ENCODE measurements at regions of chr22 and their contacts with region 1.

Region 1: DNA sequence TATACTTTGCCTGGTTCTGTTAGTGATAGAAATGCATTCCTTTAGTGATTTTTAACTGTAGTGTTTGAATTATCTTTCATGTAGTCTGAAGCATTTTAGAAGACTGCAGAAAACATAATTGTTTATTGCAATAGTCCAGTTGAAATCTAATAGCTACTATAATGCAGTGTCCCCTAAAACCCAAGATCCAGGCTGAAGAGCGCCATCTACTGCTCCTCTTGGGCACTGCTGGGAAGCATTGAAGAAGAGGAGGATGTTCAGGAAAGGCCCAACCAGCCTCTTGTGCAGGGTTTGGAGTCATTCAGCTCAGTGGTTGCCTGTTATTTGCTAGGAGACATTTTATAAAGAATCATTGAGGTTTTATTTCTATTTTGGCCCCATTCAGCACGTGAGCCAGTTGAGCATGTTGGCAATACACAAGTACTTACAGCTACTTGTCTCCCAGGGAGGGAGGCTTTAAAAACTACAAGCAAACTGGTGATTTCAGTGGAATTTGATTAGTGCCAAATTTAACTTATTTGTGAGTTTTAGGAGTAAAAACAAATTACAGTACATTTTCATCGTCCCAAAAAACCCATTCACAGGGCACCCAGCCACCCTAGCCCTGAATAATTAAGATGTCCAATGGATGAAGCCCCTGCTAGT is 74.9 kb upstream of the HORMAD2 start:
- DNase-seq: peak; percentile 47 to 84 (median 80)
- H3K4me3 ChIP-seq: no peak overlapping the region
- H3K27ac ChIP-seq: no peak overlapping the region
- H3K4me1 ChIP-seq: no peaks in the 10 kb centered on the region
- H3K27me3 ChIP-seq: no peaks in the 10 kb centered on the region
- CTCF ChIP-seq: peak; percentile 65 to 88 (median 81)
- EP300 ChIP-seq: no peak
- POLR2A ChIP-seq: no peak

Region 2: GRCh38 chr22:29635734-29636357 is 369.5 kb before region 1 on chr22:
- intact Hi-C with region 1: loop called in 1 of 4 experiments (anchors 10 kb)
- DNase-seq: no peak
- H3K4me3 ChIP-seq: no peak overlapping the region
- H3K27ac ChIP-seq: no peak overlapping the region
- H3K4me1 ChIP-seq: peaks cover 1% of the 10 kb centered on the region
- H3K27me3 ChIP-seq: no peaks in the 10 kb centered on the region
- CTCF ChIP-seq: peak in 1 of 3 donors; percentile 30
- EP300 ChIP-seq: no peak
- POLR2A ChIP-seq: no peak

Region 3: GRCh38 chr22:29689880-29690213 is 315.5 kb before region 1 on chr22:
- intact Hi-C with region 1: loop called in 2 of 4 experiments (anchors 5 to 10 kb)
- DNase-seq: peak; percentile 39 to 64 (median 62)
- H3K4me3 ChIP-seq: no peak overlapping the region
- H3K27ac ChIP-seq: no peak overlapping the region
- H3K4me1 ChIP-seq: peaks cover 11% of the 10 kb centered on the region
- H3K27me3 ChIP-seq: no peaks in the 10 kb centered on the region
- CTCF ChIP-seq: peak; percentile 11 to 41 (median 30)
- EP300 ChIP-seq: no peak
- POLR2A ChIP-seq: no peak

Region 4: GRCh38 chr22:29766632-29767170 is 238.6 kb before region 1 on chr22 and contains the start of gene ZMAT5:
- intact Hi-C with region 1: loop called in 1 of 4 experiments (anchors 10 kb)
- DNase-seq: peak; percentile 90 to 93 (median 93)
- H3K4me3 ChIP-seq: peak within 1 kb of the TSS; percentile 97
- H3K27ac ChIP-seq: peak within 1 kb of the TSS; percentile 31 to 76
- H3K4me1 ChIP-seq: peaks cover 10% of the 10 kb centered on the region
- H3K27me3 ChIP-seq: no peaks in the 10 kb centered on the region
- CTCF ChIP-seq: no peak
- EP300 ChIP-seq: no peak
- POLR2A ChIP-seq: no peak
- total RNA-seq, gene ZMAT5: 16.1 to 27.2 (median 22.3) TPM

Region 5: GRCh38 chr22:29883045-29883774 is 122.1 kb before region 1 on chr22 and contains the start of gene MTMR3:
- intact Hi-C with region 1: loop called in 1 of 4 experiments (anchors 10 kb)
- DNase-seq: peak; percentile 92 to 98 (median 97)
- H3K4me3 ChIP-seq: peak within 1 kb of the TSS; percentile 71
- H3K27ac ChIP-seq: peak within 1 kb of the TSS; percentile 96 to 98
- H3K4me1 ChIP-seq: peaks cover 14% of the 10 kb centered on the region
- H3K27me3 ChIP-seq: no peaks in the 10 kb centered on the region
- CTCF ChIP-seq: peak in 2 of 3 donors; percentile 51 to 54
- EP300 ChIP-seq: no peak
- POLR2A ChIP-seq: peak; percentile 64
- total RNA-seq, gene MTMR3: 45.4 to 66.2 (median 48.3) TPM

Measured in ovary (tissue), 10 donors.